Ascending aorta (tissue), 2 donors: ENCODE measurements at regions of chr5 and their contacts with region 1.

Region 1: GRCh38 chr5:65721720-65722574 is at the starts of genes NLN and SGTB:
- DNase-seq: peak; percentile 60 to 92
- H3K4me3 ChIP-seq: peak within 1 kb of the TSS; percentile 89 to 97
- H3K27ac ChIP-seq: peak within 1 kb of the TSS; percentile 80 to 86
- H3K4me1 ChIP-seq: peaks cover 0 to 4% of the 10 kb centered on the region in 2 donors
- H3K27me3 ChIP-seq: no peaks in the 10 kb centered on the region
- CTCF ChIP-seq: no peak
- total RNA-seq, gene NLN: 4.7 TPM
- total RNA-seq, gene SGTB: 6.9 TPM

Region 2: DNA sequence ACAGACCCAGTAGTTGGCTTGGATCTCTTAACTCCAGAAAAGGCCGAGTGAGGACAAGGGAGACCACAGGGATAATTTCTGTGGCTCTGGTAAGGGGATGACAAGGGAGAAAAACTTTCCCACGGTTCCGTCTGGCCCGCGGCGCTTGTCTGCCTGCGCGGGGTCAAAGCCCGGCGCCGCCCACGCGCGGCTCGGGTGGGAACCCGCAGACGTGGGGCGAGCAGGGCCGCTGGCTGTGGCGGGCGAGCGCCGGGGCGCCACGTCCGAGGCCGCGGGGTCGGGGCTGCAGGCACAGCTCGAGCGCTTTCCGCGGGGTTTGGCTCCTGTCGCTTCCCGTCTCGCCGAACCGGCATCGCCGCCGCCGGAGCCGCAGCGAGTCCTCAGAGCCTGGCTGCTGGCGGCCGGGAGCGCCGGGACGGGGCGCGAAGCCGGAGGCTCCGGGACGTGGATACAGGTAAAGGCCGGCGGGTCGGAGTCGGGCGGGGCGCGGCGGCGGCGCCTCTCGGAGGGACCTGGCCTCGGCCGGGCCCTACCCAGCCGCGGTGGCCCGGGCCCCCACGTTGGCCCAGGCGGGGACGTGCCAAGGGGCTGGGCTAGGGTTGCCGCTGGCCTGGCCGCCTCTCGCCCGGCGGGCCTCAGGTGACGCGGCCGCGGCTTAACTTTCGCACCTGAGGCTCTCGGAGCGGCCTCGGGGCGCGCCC is 1556.3 kb before region 1 on chr5 and contains the start of gene RNF180:
- intact Hi-C with region 1: loop called (anchors 10 kb)
- DNase-seq: peak in 1 of 2 donors; percentile 75
- H3K4me3 ChIP-seq: peak within 1 kb of the TSS; percentile 82 to 84
- H3K27ac ChIP-seq: peak within 1 kb of the TSS; percentile 95 to 97
- H3K4me1 ChIP-seq: peaks cover 4 to 13% of the 10 kb centered on the region in 2 donors
- H3K27me3 ChIP-seq: no peaks in the 10 kb centered on the region
- CTCF ChIP-seq: no peak
- total RNA-seq, gene RNF180: 7.9 TPM

Region 3: DNA sequence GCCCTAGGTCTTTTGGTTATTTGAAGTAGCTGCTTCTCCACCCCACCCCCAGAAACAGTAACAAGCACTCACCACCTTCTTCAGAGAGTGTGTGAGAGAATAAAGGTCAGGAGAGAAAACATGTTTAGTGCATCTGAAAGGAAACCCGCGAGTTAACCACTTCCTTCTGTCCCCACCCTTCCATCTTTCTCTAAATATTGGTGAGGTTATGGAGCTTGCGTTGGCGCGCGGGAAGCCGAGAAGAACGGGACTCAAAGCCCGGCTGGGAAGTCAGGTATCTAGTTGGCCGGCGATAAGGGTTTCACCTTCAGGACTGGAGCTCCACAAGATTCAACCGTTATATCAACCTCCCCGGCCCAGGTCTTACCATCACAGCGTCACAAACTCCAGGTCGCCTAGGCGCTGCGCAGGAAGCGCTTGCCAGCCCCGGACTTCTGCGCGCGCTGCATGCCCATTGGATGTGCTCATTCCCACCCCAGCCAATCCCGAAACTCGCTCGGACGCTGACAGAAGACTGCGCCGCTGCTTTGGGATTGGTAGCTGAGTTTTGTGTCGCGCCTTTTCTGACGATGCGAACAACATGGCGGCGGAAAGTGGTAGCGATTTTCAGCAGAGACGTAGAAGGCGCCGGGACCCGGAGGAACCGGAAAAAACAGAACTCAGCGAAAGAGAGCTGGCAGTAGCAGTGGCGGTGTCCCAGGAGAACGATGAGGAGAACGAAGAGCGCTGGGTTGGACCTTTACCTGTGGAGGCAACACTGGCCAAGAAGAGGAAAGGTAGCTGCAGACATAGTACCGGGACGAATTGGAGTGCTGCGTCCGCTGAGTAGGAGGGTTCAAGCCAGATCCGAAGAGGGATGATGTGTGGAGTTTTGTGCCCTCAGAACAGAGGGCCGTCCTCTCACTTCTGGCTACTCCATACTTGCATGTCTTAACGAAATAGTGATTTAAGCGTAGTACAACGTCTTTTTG is 158.9 kb before region 1 on chr5 and contains the starts of genes CENPK and PPWD1:
- intact Hi-C with region 1: loop called (anchors 5 kb)
- DNase-seq: peak; percentile 90 to 96
- H3K4me3 ChIP-seq: peak within 1 kb of the TSS; percentile 75 to 92
- H3K27ac ChIP-seq: peak within 1 kb of the TSS; percentile 75 to 86
- H3K4me1 ChIP-seq: peaks cover 0 to 12% of the 10 kb centered on the region in 2 donors
- H3K27me3 ChIP-seq: no peaks in the 10 kb centered on the region
- CTCF ChIP-seq: no peak
- total RNA-seq, gene CENPK: 5.2 TPM
- total RNA-seq, gene PPWD1: 28.6 TPM

Region 4: DNA sequence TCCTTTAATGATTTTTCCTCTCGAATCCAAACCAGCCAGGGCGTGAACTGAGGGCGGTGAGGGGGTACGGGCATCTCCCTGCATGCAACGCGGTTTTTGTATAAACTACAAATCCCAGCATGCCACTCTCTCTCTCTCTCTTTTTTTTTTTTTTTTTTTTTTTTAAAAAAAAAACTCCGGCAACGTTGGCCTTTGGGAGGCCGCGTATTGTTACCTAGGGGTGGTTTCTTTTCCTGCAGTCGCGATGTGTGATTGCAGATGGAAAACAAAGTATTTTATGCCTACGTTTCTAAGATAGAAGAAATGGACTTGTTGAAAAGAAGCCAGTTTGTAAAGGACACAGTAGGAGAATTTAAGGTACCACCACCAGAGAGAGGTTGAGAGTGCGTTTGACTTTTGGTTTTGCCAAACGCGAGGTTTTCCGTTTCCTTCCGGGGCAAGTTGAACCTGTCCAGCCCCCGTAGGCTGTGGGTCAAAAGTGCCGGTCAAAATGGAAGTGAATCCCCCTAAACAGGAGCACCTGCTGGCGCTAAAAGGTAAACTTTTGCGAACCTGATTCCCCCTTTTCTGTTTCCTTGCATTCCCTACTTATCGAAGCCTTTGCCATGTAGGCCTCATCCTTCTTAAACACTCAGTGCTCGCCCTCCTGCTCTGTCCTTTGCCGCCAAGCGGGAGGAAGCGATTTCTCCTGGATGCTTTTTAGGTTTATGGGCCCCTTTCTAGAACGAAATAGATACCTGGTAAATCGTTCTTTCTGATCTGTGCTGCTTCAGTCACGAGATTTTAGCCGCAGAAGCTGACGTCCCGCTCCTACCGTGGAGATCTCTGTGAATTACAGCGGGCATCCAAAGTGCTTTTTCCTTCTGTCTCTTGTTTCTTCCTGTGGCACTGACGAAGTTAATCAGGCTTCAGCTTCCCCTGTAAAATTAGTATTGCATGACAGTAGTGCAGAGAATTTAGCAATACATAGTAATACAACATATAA is 97.1 kb before region 1 on chr5 and contains the starts of genes SHLD3 and TRAPPC13:
- intact Hi-C with region 1: loop called (anchors 2 kb)
- DNase-seq: peak; percentile 47 to 92
- H3K4me3 ChIP-seq: peak within 1 kb of the TSS; percentile 85 to 86
- H3K27ac ChIP-seq: peak within 1 kb of the TSS; percentile 80 to 83
- H3K4me1 ChIP-seq: peaks cover 0 to 21% of the 10 kb centered on the region in 2 donors
- H3K27me3 ChIP-seq: no peaks in the 10 kb centered on the region
- CTCF ChIP-seq: peak in 1 of 3 experiments; percentile 6
- total RNA-seq, gene SHLD3: not detected
- total RNA-seq, gene TRAPPC13: 7.6 TPM

Region 5: GRCh38 chr5:65925601-65926275 is 203.8 kb after region 1 on chr5:
- intact Hi-C with region 1: loop called (anchors 10 kb)
- DNase-seq: peak; percentile 18 to 90
- H3K4me3 ChIP-seq: peak overlapping the region; percentile 97 to 99
- H3K27ac ChIP-seq: peak overlapping the region; percentile 98 to 100
- H3K4me1 ChIP-seq: peaks cover 0 to 6% of the 10 kb centered on the region in 2 donors
- H3K27me3 ChIP-seq: no peaks in the 10 kb centered on the region
- CTCF ChIP-seq: peak in 2 of 3 experiments; percentile 28 to 39

Region 6: DNA sequence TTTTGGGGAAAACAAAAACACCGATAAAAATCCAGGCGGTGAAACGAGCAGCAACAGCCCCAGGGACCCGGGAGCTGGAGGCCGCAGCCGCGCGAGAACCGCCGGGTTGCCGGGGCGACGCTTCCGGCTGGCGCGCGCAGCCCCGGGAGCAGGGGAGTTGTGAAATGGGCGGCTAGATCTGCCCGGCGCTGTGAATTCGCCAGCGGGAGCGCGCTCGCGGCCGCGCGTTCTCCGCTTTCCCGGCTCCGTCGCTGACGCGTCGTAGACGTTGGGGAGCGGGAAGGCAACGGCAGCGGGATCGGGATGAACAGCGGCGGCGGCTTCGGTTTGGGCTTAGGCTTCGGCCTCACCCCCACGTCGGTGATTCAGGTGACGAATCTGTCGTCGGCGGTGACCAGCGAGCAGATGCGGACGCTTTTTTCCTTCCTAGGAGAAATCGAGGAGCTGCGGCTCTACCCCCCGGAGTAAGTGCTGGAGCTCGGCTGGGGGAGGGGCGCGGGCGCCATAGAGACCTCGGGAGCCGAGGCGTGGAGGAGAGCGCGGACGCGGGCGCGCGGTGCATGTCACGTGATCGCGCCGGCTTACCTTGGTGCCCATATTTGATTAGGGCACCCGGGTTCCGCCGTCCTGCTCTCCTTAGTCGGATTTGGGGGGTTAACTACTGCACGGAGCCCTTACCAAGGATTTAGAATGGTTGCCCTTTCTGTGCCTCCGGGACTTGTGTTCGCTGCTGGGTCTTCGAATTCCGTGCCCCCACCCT is 422.3 kb after region 1 on chr5 and contains the start of gene SREK1:
- intact Hi-C with region 1: loop called (anchors 1 kb)
- DNase-seq: peak; percentile 65 to 94
- H3K4me3 ChIP-seq: peak within 1 kb of the TSS; percentile 89 to 92
- H3K27ac ChIP-seq: peak within 1 kb of the TSS; percentile 98 to 100
- H3K4me1 ChIP-seq: peaks cover 0 to 11% of the 10 kb centered on the region in 2 donors
- H3K27me3 ChIP-seq: no peaks in the 10 kb centered on the region
- CTCF ChIP-seq: no peak
- total RNA-seq, gene SREK1: 31.6 TPM